Activated CD4-positive, alpha-beta T cell treated with anti-CD3 and anti-CD28 coated beads for 36 hours (primary cell): ENCODE measurements at regions of chr5 and their contacts with region 1.

Region 1: GRCh38 chr5:59673438-59674058 is 220.0 kb downstream of the PDE4D start:
- DNase-seq: no peak
- ATAC-seq: peak; percentile 42
- H3K4me3 Mint-ChIP-seq: no peak overlapping the region
- H3K27ac Mint-ChIP-seq: no peak overlapping the region
- H3K4me1 Mint-ChIP-seq: no peaks in the 10 kb centered on the region
- H3K27me3 Mint-ChIP-seq: peaks cover 1% of the 10 kb centered on the region

Region 2: DNA sequence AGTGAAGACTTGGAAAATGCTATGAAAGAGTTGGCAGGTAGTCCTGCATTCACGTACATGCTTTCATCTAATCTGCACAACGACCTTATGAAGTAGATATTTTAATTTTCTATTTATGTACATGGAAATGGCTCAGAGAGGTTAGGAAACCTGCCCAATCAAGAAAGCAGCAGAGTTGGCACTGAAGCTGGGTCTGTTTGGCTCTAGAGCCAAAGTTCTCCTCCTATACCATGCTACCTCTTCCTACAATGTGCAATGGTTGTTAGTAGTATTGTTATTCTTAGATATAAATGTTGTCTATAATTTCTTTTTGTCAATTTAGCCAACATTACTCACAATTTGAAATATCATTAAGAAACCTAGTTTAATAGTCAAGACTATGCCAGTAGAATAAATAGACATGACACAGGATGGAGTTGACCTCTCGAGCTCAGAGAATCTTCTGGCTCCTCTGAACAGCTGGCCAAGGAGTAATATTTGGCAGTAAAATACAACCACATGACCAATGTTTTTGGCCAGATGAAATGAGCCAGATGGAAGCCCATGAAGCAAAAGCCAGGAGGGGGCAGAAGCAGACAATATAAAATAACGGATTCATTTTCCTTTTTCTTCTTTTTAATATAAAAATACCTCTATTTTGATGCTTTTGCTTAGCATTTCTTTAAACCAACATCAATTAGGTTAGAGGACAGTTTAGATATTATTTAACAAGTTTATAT is 322.3 kb before region 1 on chr5:
- CTCF ChIA-PET with region 1: no interaction called
- POLR2A ChIA-PET with region 1: no interaction called
- intact Hi-C with region 1: no loop called
- DNase-seq: no peak
- ATAC-seq: no peak
- H3K4me3 Mint-ChIP-seq: no peak overlapping the region
- H3K27ac Mint-ChIP-seq: no peak overlapping the region
- H3K4me1 Mint-ChIP-seq: no peaks in the 10 kb centered on the region
- H3K27me3 Mint-ChIP-seq: peaks cover 6% of the 10 kb centered on the region

Region 3: GRCh38 chr5:59390074-59390659 is 283.4 kb before region 1 on chr5:
- CTCF ChIA-PET with region 1: interaction called, 31 read pairs
- POLR2A ChIA-PET with region 1: no interaction called
- intact Hi-C with region 1: loop called (anchors 1 to 2 kb)
- DNase-seq: peak; percentile 27
- ATAC-seq: no peak
- H3K4me3 Mint-ChIP-seq: no peak overlapping the region
- H3K27ac Mint-ChIP-seq: no peak overlapping the region
- H3K4me1 Mint-ChIP-seq: no peaks in the 10 kb centered on the region
- H3K27me3 Mint-ChIP-seq: peaks cover 6% of the 10 kb centered on the region

Region 4: DNA sequence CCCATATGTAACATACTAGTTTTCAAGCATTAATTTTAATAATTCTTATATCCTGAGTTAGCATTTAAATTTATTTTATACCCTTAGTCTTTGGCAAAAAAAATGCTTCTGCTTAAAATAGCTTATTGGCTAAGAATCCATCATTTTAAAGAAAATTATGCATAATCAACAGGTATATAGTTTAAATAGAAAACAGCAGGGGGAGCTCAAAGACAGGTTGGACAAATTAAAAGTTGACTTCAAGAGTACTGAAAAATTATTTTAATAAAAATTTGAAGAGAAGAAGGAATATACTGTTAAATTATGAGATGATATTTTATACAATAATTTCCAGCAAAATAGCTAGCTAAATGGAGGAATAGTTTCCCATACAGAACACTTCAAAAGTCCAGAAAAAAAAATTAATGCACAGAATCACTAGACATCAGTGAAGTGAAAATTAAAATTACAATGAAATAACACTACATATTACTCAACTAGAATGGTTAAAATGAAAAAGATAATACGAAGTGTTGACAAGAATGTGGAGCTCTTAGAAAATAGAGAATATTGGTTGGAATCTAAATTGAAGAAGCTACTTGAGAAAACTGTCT is 167.2 kb before region 1 on chr5:
- CTCF ChIA-PET with region 1: interaction called, 31 read pairs
- POLR2A ChIA-PET with region 1: no interaction called
- intact Hi-C with region 1: loop called (anchors 1 kb)
- DNase-seq: no peak
- ATAC-seq: no peak
- H3K4me3 Mint-ChIP-seq: no peak overlapping the region
- H3K27ac Mint-ChIP-seq: no peak overlapping the region
- H3K4me1 Mint-ChIP-seq: no peaks in the 10 kb centered on the region
- H3K27me3 Mint-ChIP-seq: peaks cover 2% of the 10 kb centered on the region

Region 5: GRCh38 chr5:59660737-59661136 is 12.8 kb before region 1 on chr5:
- CTCF ChIA-PET with region 1: interaction called, 12 read pairs
- POLR2A ChIA-PET with region 1: no interaction called
- intact Hi-C with region 1: no loop called
- DNase-seq: no peak
- ATAC-seq: no peak
- H3K4me3 Mint-ChIP-seq: no peak overlapping the region
- H3K27ac Mint-ChIP-seq: no peak overlapping the region
- H3K4me1 Mint-ChIP-seq: peaks cover 11% of the 10 kb centered on the region
- H3K27me3 Mint-ChIP-seq: no peaks in the 10 kb centered on the region

Region 6: DNA sequence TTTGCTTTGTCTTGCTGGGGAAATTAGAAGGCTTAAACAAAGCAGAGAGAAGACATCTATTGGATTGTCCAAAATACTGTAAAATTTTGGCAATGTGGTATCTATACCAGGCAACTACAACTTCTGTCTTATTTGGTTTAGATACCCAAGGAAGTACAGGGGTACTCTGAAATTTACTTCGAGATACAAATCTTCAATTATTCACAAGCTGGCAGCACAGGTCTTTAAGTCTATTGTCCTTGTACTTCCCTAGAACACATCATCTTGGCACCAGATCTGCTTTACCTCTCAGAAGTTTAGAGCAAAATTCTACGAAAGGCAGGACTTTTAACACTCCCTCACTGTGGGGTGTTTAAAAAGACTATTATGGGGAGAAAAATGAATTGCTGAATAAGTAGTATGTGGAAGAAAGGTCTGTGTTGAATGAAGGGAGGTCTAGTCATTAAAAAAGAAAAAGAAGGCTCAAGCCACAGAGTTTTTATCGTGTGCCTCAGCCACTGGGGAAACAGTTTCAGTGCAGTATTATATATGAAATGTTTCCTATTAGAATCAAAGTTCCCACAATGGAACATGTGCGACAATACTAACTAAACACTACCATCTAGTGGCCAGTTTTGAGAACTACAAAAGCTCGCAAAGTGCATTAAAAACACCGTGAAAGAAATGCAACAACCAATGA is 126.3 kb after region 1 on chr5:
- CTCF ChIA-PET with region 1: interaction called, 7 read pairs
- POLR2A ChIA-PET with region 1: no interaction called
- intact Hi-C with region 1: loop called (anchors 1 to 2 kb)
- DNase-seq: peak; percentile 23
- ATAC-seq: peak; percentile 74
- H3K4me3 Mint-ChIP-seq: no peak overlapping the region
- H3K27ac Mint-ChIP-seq: no peak overlapping the region
- H3K4me1 Mint-ChIP-seq: no peaks in the 10 kb centered on the region
- H3K27me3 Mint-ChIP-seq: no peaks in the 10 kb centered on the region